Motor neuron (in vitro differentiated cells): ENCODE measurements at regions of chr7 and their contacts with region 1.

Region 1: DNA sequence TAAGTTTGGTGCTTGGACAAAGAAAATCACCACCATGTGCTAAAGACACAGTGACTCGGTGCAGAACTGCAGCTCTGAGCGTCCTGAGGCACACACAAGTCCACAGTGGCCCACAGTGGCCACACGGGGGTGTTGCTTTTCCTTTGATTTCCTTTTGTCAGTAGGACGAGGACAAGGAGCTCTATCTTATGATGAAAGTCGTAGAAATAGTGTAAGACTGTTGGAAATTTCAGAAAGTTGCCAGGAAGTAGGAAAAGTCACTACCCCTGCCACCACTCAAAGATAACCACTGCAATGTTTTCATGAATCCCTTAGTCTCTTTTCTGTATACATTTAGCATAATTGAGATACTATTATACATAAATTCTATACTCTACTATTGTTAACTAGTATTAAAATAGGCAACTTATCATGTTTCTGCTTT is 146.0 kb downstream of the TNS3 start:
- ATAC-seq: peak; percentile 86 to 100 (median 96)
- H3K4me3 ChIP-seq: no peak overlapping the region
- H3K27ac ChIP-seq: no peak overlapping the region
- H3K4me1 ChIP-seq: no peaks in the 10 kb centered on the region

Region 2: GRCh38 chr7:46705406-46706255 is 730.3 kb before region 1 on chr7:
- in situ Hi-C with region 1: no loop called
- ATAC-seq: no peak
- H3K4me3 ChIP-seq: no peak overlapping the region
- H3K27ac ChIP-seq: no peak overlapping the region
- H3K4me1 ChIP-seq: no peaks in the 10 kb centered on the region

Region 3: DNA sequence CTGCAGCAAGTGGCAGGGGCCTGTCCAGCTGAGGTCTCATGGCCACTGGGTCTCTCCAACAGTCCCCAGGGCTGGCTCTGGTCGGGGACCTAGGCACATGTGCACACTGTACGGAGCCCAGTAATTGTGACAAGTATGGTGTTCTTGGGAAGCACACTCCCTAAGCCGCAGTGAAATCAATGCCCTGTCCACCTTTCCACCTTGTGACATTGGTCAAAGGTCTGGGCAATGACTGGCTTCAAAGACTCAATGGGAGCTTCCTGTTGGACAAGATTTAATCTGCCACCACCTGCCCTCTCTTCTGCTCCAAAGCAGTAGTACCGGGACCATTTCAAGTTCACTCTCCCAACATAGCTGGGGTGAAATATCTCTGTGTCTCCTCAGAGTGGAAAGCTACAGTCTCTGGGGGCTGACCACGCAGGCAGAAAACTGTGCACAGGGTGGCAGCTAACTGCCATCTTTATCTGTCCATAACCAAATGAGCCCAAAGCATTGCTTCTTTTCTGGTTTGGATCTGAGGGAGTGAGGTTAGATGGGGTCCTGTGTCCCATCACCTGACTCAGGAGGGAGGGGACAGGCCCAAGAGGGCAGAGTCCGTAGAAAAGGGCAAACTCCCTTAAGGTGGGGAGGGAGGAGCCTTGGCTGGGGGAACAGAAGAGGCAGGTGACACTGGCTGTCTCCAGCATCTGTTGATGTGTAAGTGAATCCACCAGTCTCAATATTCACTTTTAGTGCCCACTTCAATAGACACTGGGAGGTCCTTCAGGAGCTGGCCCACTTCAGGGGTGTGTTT is 161.7 kb before region 1 on chr7:
- in situ Hi-C with region 1: loop called in 1 of 9 experiments (anchors 10 kb)
- ATAC-seq: no peak
- H3K4me3 ChIP-seq: no peak overlapping the region
- H3K27ac ChIP-seq: no peak overlapping the region
- H3K4me1 ChIP-seq: no peaks in the 10 kb centered on the region

Region 4: GRCh38 chr7:47635091-47636080 is 199.5 kb after region 1 on chr7:
- in situ Hi-C with region 1: no loop called
- ATAC-seq: peak in 7 of 8 experiments; percentile 18 to 82 (median 76)
- H3K4me3 ChIP-seq: no peak overlapping the region
- H3K27ac ChIP-seq: no peak overlapping the region
- H3K4me1 ChIP-seq: peaks cover 18 to 26% of the 10 kb centered on the region in 2 donors